GM12878 (cell line): ENCODE measurements at regions of chr5 and their contacts with region 1.

Region 1: GRCh38 chr5:177403792-177404640 is 3.6 kb upstream of the PFN3 start:
- DNase-seq: no peak
- ATAC-seq: peak; percentile 93
- H3K4me3 ChIP-seq: peak overlapping the region; percentile 79
- H3K27ac ChIP-seq: peak overlapping the region; percentile 35; the same call in 1 of the 2 replicates
- H3K4me1 ChIP-seq: peaks cover 28% of the 10 kb centered on the region
- H3K27me3 ChIP-seq: no peaks in the 10 kb centered on the region; a peak in 1 of 4 replicates
- CTCF ChIP-seq: peak; percentile 81 to 95 (median 85)
- EP300 ChIP-seq: no peak
- POLR2A ChIP-seq: peak; percentile 55; the same call in 1 of the 2 replicates
- RAD21 ChIP-seq: peak; percentile 87

Region 2: DNA sequence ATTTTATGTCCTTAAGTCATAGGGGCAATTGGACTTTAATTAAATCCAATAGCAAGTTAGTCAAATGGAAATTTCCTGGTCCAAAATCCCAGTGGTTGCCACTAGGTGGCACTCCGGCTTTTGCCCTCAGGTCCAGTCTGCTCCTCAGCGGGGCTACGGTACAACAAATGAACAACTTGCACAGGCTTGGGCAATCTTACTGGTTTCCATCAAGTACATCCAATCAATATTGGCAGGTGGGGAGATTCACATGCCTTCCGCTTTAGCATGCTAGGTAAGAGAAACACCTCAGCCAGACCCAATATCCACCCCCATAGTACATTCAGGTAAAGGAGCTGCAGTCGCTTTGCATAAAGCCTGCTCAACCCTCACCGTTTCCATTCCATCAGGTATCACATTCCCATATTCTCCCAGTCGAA is 86.0 kb before region 1 on chr5:
- CTCF ChIA-PET with region 1: interaction called, 54 read pairs
- POLR2A ChIA-PET with region 1: interaction called, 6 read pairs
- RAD21 ChIA-PET with region 1: interaction called, 26 read pairs
- SMC1A ChIA-PET with region 1: interaction called, 23 read pairs
- in situ Hi-C with region 1: no loop called
- intact Hi-C with region 1: loop called (anchors 1 kb)
- DNase-seq: no peak
- ATAC-seq: peak; percentile 80
- H3K4me3 ChIP-seq: no peak overlapping the region
- H3K27ac ChIP-seq: no peak overlapping the region
- H3K4me1 ChIP-seq: peaks cover 11% of the 10 kb centered on the region
- H3K27me3 ChIP-seq: no peaks in the 10 kb centered on the region
- CTCF ChIP-seq: peak; percentile 85 to 97 (median 93)
- EP300 ChIP-seq: no peak
- POLR2A ChIP-seq: no peak
- RAD21 ChIP-seq: peak; percentile 90

Region 3: DNA sequence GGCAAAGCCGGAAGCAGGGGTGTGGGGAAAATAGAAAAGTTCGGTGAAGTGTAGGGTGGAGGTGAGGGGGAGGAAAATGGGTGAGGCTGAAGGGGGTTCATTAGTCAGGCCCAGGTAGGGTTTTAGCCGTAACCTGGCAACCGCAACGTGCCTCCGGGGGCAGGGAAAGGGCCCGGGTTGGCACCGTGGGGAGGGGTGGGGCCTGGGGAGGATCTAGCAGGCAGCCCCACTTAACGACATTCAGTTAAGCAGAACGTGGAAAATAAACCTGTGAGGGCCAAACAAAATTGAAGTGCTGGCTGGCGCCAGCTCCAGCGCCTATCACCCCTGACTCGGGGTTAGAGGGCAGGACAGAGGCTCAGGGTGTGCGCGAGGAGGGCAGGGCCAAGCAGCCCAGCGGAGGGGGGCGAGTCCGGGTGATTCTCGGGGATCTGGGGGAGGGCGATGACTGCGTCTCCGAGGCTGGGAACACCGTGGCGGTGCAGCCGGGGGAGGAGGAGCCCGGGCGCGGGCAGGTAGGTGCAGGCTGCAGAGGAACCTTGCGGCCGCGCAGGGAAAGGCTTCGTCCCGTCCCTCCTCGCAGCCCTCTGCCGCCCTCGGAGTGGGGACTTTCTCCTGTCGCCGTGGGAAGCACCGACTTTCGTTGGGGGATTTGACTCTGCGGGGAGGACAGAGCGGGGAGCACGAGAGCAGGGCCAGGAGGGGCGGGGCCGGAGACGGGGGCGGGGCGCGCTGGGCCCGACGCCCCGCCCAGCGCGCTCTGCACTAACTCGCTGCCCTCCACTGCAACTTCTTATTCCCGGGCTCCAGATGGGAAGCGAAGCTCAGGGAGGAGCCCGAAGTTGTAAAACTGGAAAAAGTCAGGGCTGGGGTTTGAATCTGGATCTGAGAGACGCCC is 41.2 kb before region 1 on chr5:
- CTCF ChIA-PET with region 1: interaction called, 12 read pairs
- POLR2A ChIA-PET with region 1: interaction called, 4 read pairs
- RAD21 ChIA-PET with region 1: interaction called, 11 read pairs
- SMC1A ChIA-PET with region 1: interaction called, 10 read pairs
- in situ Hi-C with region 1: no loop called
- intact Hi-C with region 1: no loop called
- DNase-seq: no peak
- ATAC-seq: peak; percentile 72
- H3K4me3 ChIP-seq: peak overlapping the region; percentile 63
- H3K27ac ChIP-seq: peak overlapping the region; percentile 91
- H3K4me1 ChIP-seq: peaks cover 59% of the 10 kb centered on the region
- H3K27me3 ChIP-seq: no peaks in the 10 kb centered on the region
- CTCF ChIP-seq: no peak; a peak in 1 of 6 replicates
- EP300 ChIP-seq: no peak; a peak in 1 of 4 replicates
- POLR2A ChIP-seq: peak; percentile 59
- RAD21 ChIP-seq: no peak

Region 4: GRCh38 chr5:177382423-177383029 is 21.5 kb before region 1 on chr5:
- CTCF ChIA-PET with region 1: interaction called, 240 read pairs
- POLR2A ChIA-PET with region 1: no interaction called
- RAD21 ChIA-PET with region 1: interaction called, 3 read pairs
- SMC1A ChIA-PET with region 1: no interaction called
- in situ Hi-C with region 1: no loop called
- intact Hi-C with region 1: no loop called
- DNase-seq: no peak
- ATAC-seq: peak; percentile 31
- H3K4me3 ChIP-seq: no peak overlapping the region
- H3K27ac ChIP-seq: no peak overlapping the region
- H3K4me1 ChIP-seq: peaks cover 6% of the 10 kb centered on the region
- H3K27me3 ChIP-seq: no peaks in the 10 kb centered on the region
- CTCF ChIP-seq: peak; percentile 17 to 25 (median 20); a peak in 3 of 6 replicates
- EP300 ChIP-seq: no peak
- POLR2A ChIP-seq: no peak
- RAD21 ChIP-seq: peak; percentile 29; the same call in 1 of the 2 replicates

Region 5: GRCh38 chr5:177431317-177432142 is 27.5 kb after region 1 on chr5:
- CTCF ChIA-PET with region 1: interaction called, 188 read pairs
- POLR2A ChIA-PET with region 1: interaction called, 174 read pairs
- RAD21 ChIA-PET with region 1: interaction called, 128 read pairs
- SMC1A ChIA-PET with region 1: interaction called, 64 read pairs
- in situ Hi-C with region 1: no loop called
- intact Hi-C with region 1: loop called (anchors 1 kb)
- DNase-seq: peak; percentile 77
- ATAC-seq: peak; percentile 59
- H3K4me3 ChIP-seq: peak overlapping the region; percentile 83; the same call in 1 of the 2 replicates
- H3K27ac ChIP-seq: peak overlapping the region; percentile 94
- H3K4me1 ChIP-seq: peaks cover 49% of the 10 kb centered on the region
- H3K27me3 ChIP-seq: no peaks in the 10 kb centered on the region
- CTCF ChIP-seq: no peak
- EP300 ChIP-seq: peak; percentile 55 to 61; a peak in 3 of 4 replicates
- POLR2A ChIP-seq: no peak
- RAD21 ChIP-seq: no peak

Region 6: GRCh38 chr5:177454397-177455035 is 50.5 kb after region 1 on chr5:
- CTCF ChIA-PET with region 1: interaction called, 391 read pairs
- POLR2A ChIA-PET with region 1: interaction called, 76 read pairs
- RAD21 ChIA-PET with region 1: interaction called, 291 read pairs
- SMC1A ChIA-PET with region 1: interaction called, 105 read pairs
- in situ Hi-C with region 1: no loop called
- intact Hi-C with region 1: loop called (anchors 1 kb)
- DNase-seq: no peak
- ATAC-seq: peak; percentile 68
- H3K4me3 ChIP-seq: peak overlapping the region; percentile 82
- H3K27ac ChIP-seq: peak overlapping the region; percentile 67
- H3K4me1 ChIP-seq: peaks cover 11% of the 10 kb centered on the region
- H3K27me3 ChIP-seq: no peaks in the 10 kb centered on the region
- CTCF ChIP-seq: peak; percentile 79 to 98 (median 87); a peak in 4 of 6 replicates
- EP300 ChIP-seq: peak; percentile 39 to 70; a peak in 3 of 4 replicates
- POLR2A ChIP-seq: no peak
- RAD21 ChIP-seq: peak; percentile 84

Region 7: GRCh38 chr5:177509381-177509951 is 105.5 kb after region 1 on chr5 and contains the start of gene DOK3:
- CTCF ChIA-PET with region 1: interaction called, 19 read pairs
- POLR2A ChIA-PET with region 1: no interaction called
- RAD21 ChIA-PET with region 1: interaction called, 4 read pairs
- SMC1A ChIA-PET with region 1: interaction called, 4 read pairs
- in situ Hi-C with region 1: no loop called
- intact Hi-C with region 1: no loop called
- DNase-seq: no peak
- ATAC-seq: peak; percentile 63
- H3K4me3 ChIP-seq: peak within 1 kb of the TSS; percentile 87
- H3K27ac ChIP-seq: peak within 1 kb of the TSS; percentile 87
- H3K4me1 ChIP-seq: peaks cover 37% of the 10 kb centered on the region
- H3K27me3 ChIP-seq: no peaks in the 10 kb centered on the region
- CTCF ChIP-seq: no peak
- EP300 ChIP-seq: no peak
- POLR2A ChIP-seq: no peak
- RAD21 ChIP-seq: no peak
- polyA plus RNA-seq, gene DOK3: 6.6 to 8.0 TPM